A673 (cell line): ENCODE measurements at regions of chr2 and their contacts with region 1.

Region 1: GRCh38 chr2:160087854-160088745 is 25.7 kb upstream of the PLA2R1 start:
- DNase-seq: peak; percentile 34
- H3K4me3 ChIP-seq: no peak overlapping the region
- H3K27ac ChIP-seq: no peak overlapping the region
- H3K4me1 ChIP-seq: no peaks in the 10 kb centered on the region
- H3K27me3 ChIP-seq: no peaks in the 10 kb centered on the region
- CTCF ChIP-seq: peak; percentile 32; the same call in 1 of the 2 replicates

Region 2: DNA sequence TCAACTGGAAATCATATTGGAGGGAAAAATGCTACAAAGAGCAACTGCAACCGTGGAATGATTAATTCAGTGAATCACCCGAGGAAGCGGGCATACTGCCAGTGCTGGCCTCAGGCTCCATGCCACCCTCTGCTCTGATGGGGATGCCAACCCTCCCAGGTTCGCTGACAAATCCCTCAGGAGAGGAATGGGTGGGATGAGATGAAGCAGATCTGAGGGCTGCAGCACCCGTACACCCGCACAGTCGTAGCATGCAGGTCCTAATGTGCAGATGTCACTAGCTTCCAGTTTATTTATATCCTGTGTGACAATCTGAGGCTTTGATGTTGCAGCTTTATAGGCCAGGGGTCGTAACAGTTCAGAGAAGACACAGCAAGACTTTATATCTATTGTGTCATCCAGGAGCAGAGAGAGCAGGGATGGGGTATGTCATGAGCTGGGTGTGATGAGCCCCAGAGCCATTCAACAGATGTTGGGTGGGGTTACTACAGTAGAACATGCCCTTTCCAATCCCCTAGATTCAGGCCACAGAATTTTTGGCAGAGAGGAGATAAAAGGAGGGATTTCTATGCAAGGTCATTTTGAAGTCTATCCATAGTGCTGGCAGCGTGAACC is 1941.3 kb after region 1 on chr2:
- CTCF ChIA-PET with region 1: no interaction called
- POLR2A ChIA-PET with region 1: no interaction called
- intact Hi-C with region 1: loop called (anchors 5 kb)
- DNase-seq: peak; percentile 3
- H3K4me3 ChIP-seq: no peak overlapping the region
- H3K27ac ChIP-seq: no peak overlapping the region
- H3K4me1 ChIP-seq: no peaks in the 10 kb centered on the region
- H3K27me3 ChIP-seq: no peaks in the 10 kb centered on the region
- CTCF ChIP-seq: no peak